ENCODE measurements at regions of chr18 and their contacts with region 1.

Region 1: DNA sequence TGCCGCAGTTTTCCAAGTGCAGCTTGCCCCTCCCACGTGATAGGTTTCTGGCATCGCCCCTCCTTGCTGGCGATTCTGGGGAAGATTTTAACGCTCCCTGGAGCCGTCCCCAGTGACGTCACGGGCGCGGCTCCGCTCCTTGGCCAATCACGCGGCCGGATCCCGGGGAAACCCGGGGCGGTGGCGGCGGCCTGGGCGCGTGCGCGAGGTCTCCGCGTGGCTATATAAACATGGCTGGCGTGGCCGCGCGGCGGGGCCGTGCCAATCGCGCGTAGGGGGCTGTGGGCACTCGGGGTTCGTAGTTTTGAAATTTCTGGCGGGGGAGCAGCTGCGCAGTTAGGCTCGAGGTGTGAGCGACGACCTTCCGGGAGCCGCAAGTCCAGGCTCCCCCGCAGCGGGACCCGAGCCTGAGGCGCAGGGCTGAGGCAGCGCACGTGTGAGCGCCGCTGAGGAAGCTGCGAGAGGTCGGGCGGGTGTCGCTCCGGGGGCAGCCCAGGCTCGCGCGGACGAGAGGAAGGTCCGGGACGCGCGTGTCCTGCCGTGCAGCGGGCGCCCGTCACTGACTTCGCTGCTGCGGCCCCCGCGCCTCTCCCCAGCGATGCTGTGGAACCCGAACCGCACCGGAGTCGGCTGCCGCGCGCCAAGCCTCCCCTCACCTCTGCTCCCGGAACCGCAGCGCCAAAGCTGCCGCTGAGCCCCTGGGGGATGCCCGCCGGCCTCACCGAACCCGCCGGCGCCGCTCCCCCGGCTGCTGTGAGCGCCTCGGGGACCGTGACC is at the start of gene TAF4B:
- DNase-seq: peak; percentile 94
- ATAC-seq: peak; percentile 82
- H3K4me3 Mint-ChIP-seq: peak within 1 kb of the TSS; percentile 95
- H3K27ac Mint-ChIP-seq: peak within 1 kb of the TSS; percentile 96
- H3K4me1 Mint-ChIP-seq: peaks cover 38% of the 10 kb centered on the region
- H3K27me3 Mint-ChIP-seq: no peaks in the 10 kb centered on the region
- CTCF ChIP-seq: no peak
- total RNA-seq, gene TAF4B: 14.7 to 15.1 TPM

Region 2: DNA sequence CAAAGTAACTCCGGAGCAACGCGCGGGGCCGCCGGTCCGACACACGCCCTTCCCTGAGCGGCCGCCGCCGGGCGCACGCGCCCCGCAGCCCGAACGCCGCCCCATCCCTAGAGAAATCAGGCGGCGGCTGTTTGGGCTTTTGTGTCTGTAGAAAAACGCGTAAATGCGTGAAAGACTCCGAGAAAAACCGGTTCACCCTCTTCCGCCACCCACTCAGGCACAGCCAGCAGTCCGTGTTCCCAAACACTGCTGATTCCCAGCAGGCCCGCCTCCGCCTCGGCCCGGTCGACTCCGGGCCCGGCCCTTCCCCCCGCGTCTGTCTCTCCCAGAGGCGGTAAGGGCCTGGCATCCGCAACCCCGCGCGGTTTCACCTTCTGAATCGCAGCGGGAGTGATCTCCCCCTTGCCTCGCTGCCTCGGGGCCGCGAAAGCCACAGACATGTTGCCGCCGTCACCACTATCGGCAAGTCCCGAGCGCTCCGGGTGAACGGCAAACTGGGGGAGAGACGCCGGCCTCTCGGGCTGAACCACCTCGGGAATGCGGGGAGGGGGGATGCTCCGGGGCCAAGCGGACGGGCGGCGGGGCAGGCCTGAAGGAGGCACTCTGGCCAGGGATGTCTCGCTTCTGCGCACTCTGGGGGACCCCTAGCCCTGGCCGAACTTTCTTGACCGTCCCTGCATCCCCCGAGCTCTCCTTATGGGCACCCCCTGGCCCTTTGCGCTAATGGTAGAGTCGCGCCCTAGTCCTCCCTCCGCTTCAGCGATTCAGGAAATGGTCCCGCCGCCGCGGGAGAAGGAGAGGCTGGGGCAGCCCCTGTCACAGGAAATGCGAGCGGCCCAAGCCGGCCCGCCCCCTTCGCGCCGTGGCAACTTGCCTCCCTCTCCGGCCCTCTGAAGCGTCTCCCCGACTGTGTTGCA is 136.0 kb before region 1 on chr18 and contains the start of gene SS18:
- CTCF ChIA-PET with region 1: no interaction called
- POLR2A ChIA-PET with region 1: interaction called, 4 read pairs
- intact Hi-C with region 1: loop called (anchors 5 kb)
- DNase-seq: peak; percentile 94
- ATAC-seq: peak; percentile 90
- H3K4me3 Mint-ChIP-seq: peak within 1 kb of the TSS; percentile 87
- H3K27ac Mint-ChIP-seq: peak within 1 kb of the TSS; percentile 96
- H3K4me1 Mint-ChIP-seq: peaks cover 31% of the 10 kb centered on the region
- H3K27me3 Mint-ChIP-seq: no peaks in the 10 kb centered on the region
- CTCF ChIP-seq: no peak
- total RNA-seq, gene SS18: 37.4 to 38.2 TPM

Region 3: GRCh38 chr18:26192233-26192632 is 34.2 kb before region 1 on chr18:
- CTCF ChIA-PET with region 1: no interaction called
- POLR2A ChIA-PET with region 1: interaction called, 3 read pairs
- intact Hi-C with region 1: loop called (anchors 2 kb)
- DNase-seq: no peak
- ATAC-seq: no peak
- H3K4me3 Mint-ChIP-seq: no peak overlapping the region
- H3K27ac Mint-ChIP-seq: no peak overlapping the region
- H3K4me1 Mint-ChIP-seq: peaks cover 13% of the 10 kb centered on the region
- H3K27me3 Mint-ChIP-seq: no peaks in the 10 kb centered on the region
- CTCF ChIP-seq: no peak

Region 4: GRCh38 chr18:26215247-26215970 is 11.0 kb before region 1 on chr18:
- CTCF ChIA-PET with region 1: no interaction called
- POLR2A ChIA-PET with region 1: interaction called, 12 read pairs
- intact Hi-C with region 1: no loop called
- DNase-seq: peak; percentile 56
- ATAC-seq: peak; percentile 97
- H3K4me3 Mint-ChIP-seq: peak overlapping the region; percentile 78
- H3K27ac Mint-ChIP-seq: peak overlapping the region; percentile 96
- H3K4me1 Mint-ChIP-seq: peaks cover 18% of the 10 kb centered on the region
- H3K27me3 Mint-ChIP-seq: no peaks in the 10 kb centered on the region
- CTCF ChIP-seq: no peak